ENCODE measurements at regions of chr12 and their contacts with region 1.

Region 1: GRCh38 chr12:74170645-74171477 is 366.8 kb upstream of the ATXN7L3B start:
- DNase-seq: no peak
- H3K4me3 ChIP-seq: no peak overlapping the region
- H3K27ac ChIP-seq: no peak overlapping the region
- H3K4me1 ChIP-seq: no peaks in the 10 kb centered on the region
- H3K27me3 ChIP-seq: no peaks in the 10 kb centered on the region
- CTCF ChIP-seq: no peak

Region 2: DNA sequence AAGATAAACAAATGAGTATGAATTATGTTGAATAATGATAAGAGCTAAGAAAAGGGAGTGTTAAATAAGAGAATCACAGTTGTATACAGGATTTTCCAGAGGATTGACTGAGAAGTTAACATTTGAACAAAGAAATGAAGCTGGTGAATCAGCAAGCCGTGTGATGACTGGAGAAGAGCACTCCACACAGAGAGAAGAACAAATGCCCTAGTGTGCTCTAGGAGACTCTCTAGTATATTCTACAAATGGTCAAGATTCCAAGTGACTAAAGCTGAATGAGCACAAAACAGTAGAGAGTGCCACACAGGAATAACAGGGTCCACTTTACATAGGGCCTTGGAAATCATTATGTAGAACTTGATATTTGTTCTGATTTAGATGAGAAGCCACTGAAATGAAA is 220.4 kb before region 1 on chr12:
- CTCF ChIA-PET with region 1: no interaction called
- POLR2A ChIA-PET with region 1: no interaction called
- intact Hi-C with region 1: no loop called
- DNase-seq: peak; percentile 1
- H3K4me3 ChIP-seq: no peak overlapping the region
- H3K27ac ChIP-seq: no peak overlapping the region
- H3K4me1 ChIP-seq: no peaks in the 10 kb centered on the region
- H3K27me3 ChIP-seq: no peaks in the 10 kb centered on the region
- CTCF ChIP-seq: no peak

Region 3: DNA sequence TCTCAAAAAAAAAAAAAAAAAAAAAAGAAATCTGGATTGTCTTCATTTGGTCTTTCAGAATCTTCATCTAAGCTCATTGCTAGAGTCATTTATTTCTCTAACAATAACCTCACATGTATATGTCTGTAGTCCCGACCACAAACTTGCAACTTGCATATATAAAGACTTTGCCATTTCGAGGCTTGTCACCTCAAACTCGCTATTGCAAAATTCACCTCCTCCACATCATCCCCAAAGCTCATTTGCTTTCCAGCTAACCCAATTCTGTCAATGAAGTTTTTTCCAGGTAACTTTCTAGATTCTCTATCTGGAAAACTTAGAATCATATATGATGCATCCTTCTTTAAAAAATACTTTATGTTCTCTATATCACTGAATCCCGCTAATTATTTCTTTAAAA is 26.5 kb before region 1 on chr12:
- CTCF ChIA-PET with region 1: no interaction called
- POLR2A ChIA-PET with region 1: no interaction called
- intact Hi-C with region 1: loop called (anchors 2 kb)
- DNase-seq: no peak
- H3K4me3 ChIP-seq: no peak overlapping the region
- H3K27ac ChIP-seq: no peak overlapping the region
- H3K4me1 ChIP-seq: no peaks in the 10 kb centered on the region
- H3K27me3 ChIP-seq: no peaks in the 10 kb centered on the region
- CTCF ChIP-seq: no peak

Measured in A673 (cell line).